ENCODE measurements at regions of chr15 and their contacts with region 1.

Region 1: DNA sequence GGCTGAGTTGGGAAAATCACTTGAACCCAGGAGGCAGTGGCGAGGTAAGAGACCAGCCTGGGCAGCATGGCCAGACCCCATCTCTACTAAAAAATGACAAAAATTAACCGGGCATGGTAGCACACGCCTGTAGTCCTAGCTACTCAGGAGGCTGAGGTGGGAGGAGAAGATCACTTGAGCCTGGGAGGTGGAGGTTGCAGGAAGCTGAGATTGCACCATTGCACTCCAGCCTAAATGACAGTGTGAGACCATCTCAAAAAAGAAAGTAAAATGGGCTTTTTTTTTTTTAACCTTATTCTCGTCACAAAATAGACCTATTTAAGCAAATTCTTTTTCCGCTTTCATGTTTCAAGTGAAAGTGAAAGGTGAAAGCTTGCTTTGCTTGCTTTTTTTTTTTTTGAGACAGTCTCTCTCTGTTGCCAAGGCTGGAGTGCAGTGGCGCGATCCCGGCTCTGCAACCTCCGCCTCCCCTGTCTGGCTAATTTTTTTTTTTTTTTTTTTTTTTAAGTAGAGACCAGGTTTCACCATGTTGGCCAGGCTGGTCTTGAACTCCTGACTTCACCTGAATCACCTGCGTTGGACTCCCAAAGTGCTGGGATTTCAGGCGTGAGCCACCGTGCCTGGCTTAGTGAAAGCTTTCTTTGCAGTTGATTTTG is 3.6 kb downstream of the PDIA3 start:
- DNase-seq: peak; percentile 49 to 59 (median 56)
- H3K4me3 ChIP-seq: peak overlapping the region; percentile 0 to 67 (median 31)
- H3K4me3 Mint-ChIP-seq: peak overlapping the region; percentile 71
- H3K27ac ChIP-seq: peak overlapping the region; percentile 47 to 60
- H3K27ac Mint-ChIP-seq: peak overlapping the region; percentile 77 to 93 (median 89)
- H3K4me1 ChIP-seq: peaks cover 33 to 44% of the 10 kb centered on the region in 2 donors
- H3K4me1 Mint-ChIP-seq: peaks cover 35% of the 10 kb centered on the region
- H3K27me3 ChIP-seq: no peaks in the 10 kb centered on the region
- H3K27me3 Mint-ChIP-seq: no peaks in the 10 kb centered on the region
- CTCF ChIP-seq: no peak

Region 2: DNA sequence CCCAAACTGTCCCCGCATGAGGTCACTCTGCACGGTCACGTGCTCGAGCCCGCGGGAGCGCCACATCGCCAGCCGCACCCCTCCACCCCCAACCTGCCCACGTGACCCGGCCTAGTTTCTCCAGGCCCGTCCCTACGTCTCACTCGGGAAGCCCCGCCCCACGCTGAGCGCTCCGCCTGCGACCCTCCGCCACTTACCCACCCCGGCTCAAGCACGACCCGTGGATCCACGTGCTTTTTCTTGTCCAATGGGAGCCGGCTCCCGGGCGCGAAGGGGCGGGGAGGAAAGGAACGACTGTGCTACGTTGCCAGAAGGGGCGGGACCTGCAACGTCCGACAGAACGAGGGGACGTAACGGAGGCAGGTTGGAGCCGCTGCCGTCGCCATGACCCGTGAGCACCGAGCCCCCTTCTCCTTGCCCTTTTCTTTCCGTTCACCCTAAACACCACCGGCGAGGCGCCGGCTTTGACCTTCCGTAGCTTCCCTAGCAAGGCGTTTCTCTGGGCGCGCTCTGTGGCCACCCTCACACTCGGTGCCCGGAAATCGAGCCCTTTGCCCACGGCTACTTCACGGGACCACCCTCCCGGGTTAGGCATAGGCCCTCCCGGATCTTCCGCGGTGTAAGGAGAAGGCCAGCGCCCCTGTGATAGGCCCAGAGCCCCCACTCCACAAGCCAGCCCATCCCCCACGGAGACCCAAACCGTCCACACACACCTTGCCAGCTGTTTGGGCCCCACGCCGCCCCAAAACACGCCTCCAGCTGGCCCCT is 42.4 kb after region 1 on chr15 and contains the start of gene SERF2:
- intact Hi-C with region 1: loop called in 1 of 2 experiments (anchors 5 kb)
- DNase-seq: peak; percentile 98 to 100 (median 100)
- H3K4me3 ChIP-seq: peak within 1 kb of the TSS; percentile 83 to 100 (median 100)
- H3K4me3 Mint-ChIP-seq: peak within 1 kb of the TSS; percentile 95
- H3K27ac ChIP-seq: peak within 1 kb of the TSS; percentile 98 to 100
- H3K27ac Mint-ChIP-seq: peak within 1 kb of the TSS; percentile 98 to 100 (median 99)
- H3K4me1 ChIP-seq: peaks cover 21 to 27% of the 10 kb centered on the region in 2 donors
- H3K4me1 Mint-ChIP-seq: peaks cover 35% of the 10 kb centered on the region
- H3K27me3 ChIP-seq: no peaks in the 10 kb centered on the region
- H3K27me3 Mint-ChIP-seq: peaks cover 0 to 1% (median 0%) of the 10 kb centered on the region in 3 donors
- CTCF ChIP-seq: no peak
- polyA plus RNA-seq, gene SERF2: 1,511 to 3,135 (median 2,483) TPM

Region 3: DNA sequence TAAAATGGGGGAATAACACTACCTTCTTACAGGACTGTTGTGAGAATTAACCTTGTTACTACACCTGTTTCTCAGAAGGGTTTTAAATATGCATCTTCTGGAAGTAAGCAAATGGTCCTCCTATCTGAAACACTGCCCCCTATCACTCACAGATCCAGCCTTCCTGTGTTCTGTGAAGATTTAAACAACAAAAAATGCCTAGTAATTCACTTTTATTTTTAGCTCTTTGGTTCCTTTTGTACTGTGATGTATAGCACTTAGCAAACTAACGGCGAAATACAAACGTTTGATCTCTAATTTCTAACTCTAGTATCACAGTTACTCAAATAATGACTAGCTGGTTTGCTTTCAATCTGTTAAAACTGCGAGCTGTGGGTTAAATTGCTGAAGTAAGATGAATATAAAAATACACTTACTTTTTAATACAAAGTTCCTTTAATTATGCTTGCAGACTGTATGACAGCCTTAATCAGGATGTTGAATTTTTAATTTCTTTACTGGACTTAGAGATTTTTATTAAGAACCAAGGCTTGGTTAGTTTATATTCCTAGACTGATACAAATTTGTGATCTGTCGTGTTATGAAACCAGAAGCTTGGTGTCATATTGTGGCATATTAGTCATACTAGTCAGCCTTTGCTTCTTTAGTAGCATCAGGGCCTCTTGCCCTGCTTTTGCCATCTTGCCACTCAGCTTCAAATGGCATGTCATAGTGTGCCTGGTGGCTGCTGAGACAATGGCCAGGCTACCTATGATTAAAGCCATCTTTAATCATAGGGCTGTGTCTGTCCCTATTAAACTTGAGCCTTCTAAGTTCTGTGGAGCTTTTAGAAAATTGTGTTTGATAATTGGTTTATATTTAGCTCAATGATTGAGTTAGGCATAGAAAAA is 796.3 kb after region 1 on chr15:
- intact Hi-C with region 1: loop called in 1 of 2 experiments (anchors 10 kb)
- DNase-seq: peak; percentile 58 to 71 (median 63)
- H3K4me3 ChIP-seq: no peak overlapping the region
- H3K4me3 Mint-ChIP-seq: no peak overlapping the region
- H3K27ac ChIP-seq: peak overlapping the region in 1 of 2 donors; percentile 66
- H3K27ac Mint-ChIP-seq: peak overlapping the region; percentile 62 to 84 (median 73)
- H3K4me1 ChIP-seq: peaks cover 0 to 15% of the 10 kb centered on the region in 2 donors
- H3K4me1 Mint-ChIP-seq: peaks cover 28% of the 10 kb centered on the region
- H3K27me3 ChIP-seq: no peaks in the 10 kb centered on the region
- H3K27me3 Mint-ChIP-seq: peaks cover 0 to 3% (median 0%) of the 10 kb centered on the region in 3 donors
- CTCF ChIP-seq: peak; percentile 38